CD4-positive, alpha-beta T cell (primary cell): ENCODE measurements at regions of chr3 and their contacts with region 1.

Region 1: GRCh38 chr3:88082854-88083253 is 23.8 kb downstream of the ZNF654 start:
- DNase-seq: no peak
- ATAC-seq: no peak
- H3K4me3 ChIP-seq: no peak overlapping the region
- H3K4me3 Mint-ChIP-seq: no peak overlapping the region
- H3K27ac ChIP-seq: no peak overlapping the region
- H3K27ac Mint-ChIP-seq: no peak overlapping the region
- H3K4me1 ChIP-seq: no peaks in the 10 kb centered on the region
- H3K4me1 Mint-ChIP-seq: peaks cover 70% of the 10 kb centered on the region
- H3K27me3 ChIP-seq: no peaks in the 10 kb centered on the region
- H3K27me3 Mint-ChIP-seq: no peaks in the 10 kb centered on the region
- CTCF ChIP-seq: no peak

Region 2: GRCh38 chr3:87756616-87757015 is 326.2 kb before region 1 on chr3:
- CTCF ChIA-PET with region 1: no interaction called
- POLR2A ChIA-PET with region 1: no interaction called
- intact Hi-C with region 1: no loop called
- DNase-seq: no peak
- ATAC-seq: no peak
- H3K4me3 ChIP-seq: no peak overlapping the region
- H3K4me3 Mint-ChIP-seq: no peak overlapping the region
- H3K27ac ChIP-seq: no peak overlapping the region
- H3K27ac Mint-ChIP-seq: no peak overlapping the region
- H3K4me1 ChIP-seq: no peaks in the 10 kb centered on the region
- H3K4me1 Mint-ChIP-seq: no peaks in the 10 kb centered on the region
- H3K27me3 ChIP-seq: no peaks in the 10 kb centered on the region
- H3K27me3 Mint-ChIP-seq: peaks cover 8% of the 10 kb centered on the region
- CTCF ChIP-seq: no peak

Region 3: DNA sequence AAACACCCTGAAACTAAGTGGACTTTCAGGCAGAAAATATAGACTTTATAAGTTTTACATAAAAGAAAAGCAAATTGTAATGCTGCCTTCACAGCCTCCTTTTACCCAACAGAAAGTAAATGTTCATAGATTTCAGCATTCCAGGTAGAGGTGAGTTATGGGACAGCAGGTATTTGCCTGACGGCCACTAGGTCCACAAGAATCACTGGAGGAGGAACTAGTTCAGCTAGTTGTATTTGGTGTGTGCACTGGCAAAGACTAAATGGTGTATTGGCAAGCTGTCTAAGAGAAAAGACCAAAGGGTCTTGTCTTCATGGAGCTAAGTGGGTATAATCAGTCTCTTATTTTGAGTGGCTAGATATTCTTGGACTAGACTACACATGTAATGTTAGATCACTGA is 10.4 kb after region 1 on chr3:
- CTCF ChIA-PET with region 1: no interaction called
- POLR2A ChIA-PET with region 1: no interaction called
- intact Hi-C with region 1: loop called in 1 of 2 experiments (anchors 1 kb)
- DNase-seq: no peak
- ATAC-seq: no peak
- H3K4me3 ChIP-seq: no peak overlapping the region
- H3K4me3 Mint-ChIP-seq: no peak overlapping the region
- H3K27ac ChIP-seq: no peak overlapping the region
- H3K27ac Mint-ChIP-seq: no peak overlapping the region
- H3K4me1 ChIP-seq: no peaks in the 10 kb centered on the region
- H3K4me1 Mint-ChIP-seq: peaks cover 34% of the 10 kb centered on the region
- H3K27me3 ChIP-seq: no peaks in the 10 kb centered on the region
- H3K27me3 Mint-ChIP-seq: no peaks in the 10 kb centered on the region
- CTCF ChIP-seq: no peak

Region 4: GRCh38 chr3:88433568-88433967 is 350.7 kb after region 1 on chr3:
- CTCF ChIA-PET with region 1: no interaction called
- POLR2A ChIA-PET with region 1: no interaction called
- intact Hi-C with region 1: no loop called
- DNase-seq: no peak
- ATAC-seq: no peak
- H3K4me3 ChIP-seq: no peak overlapping the region
- H3K4me3 Mint-ChIP-seq: no peak overlapping the region
- H3K27ac ChIP-seq: no peak overlapping the region
- H3K27ac Mint-ChIP-seq: no peak overlapping the region
- H3K4me1 ChIP-seq: no peaks in the 10 kb centered on the region
- H3K4me1 Mint-ChIP-seq: no peaks in the 10 kb centered on the region
- H3K27me3 ChIP-seq: no peaks in the 10 kb centered on the region
- H3K27me3 Mint-ChIP-seq: no peaks in the 10 kb centered on the region
- CTCF ChIP-seq: no peak